ENCODE measurements at regions of chr2 and their contacts with region 1.

Region 1: GRCh38 chr2:70964596-70965386 is 13.6 kb upstream of the ANKRD53 start:
- DNase-seq: peak; percentile 89
- ATAC-seq: peak; percentile 97
- H3K4me3 Mint-ChIP-seq: peak overlapping the region; percentile 77
- H3K27ac Mint-ChIP-seq: no peak overlapping the region
- H3K4me1 Mint-ChIP-seq: peaks cover 3% of the 10 kb centered on the region
- H3K27me3 Mint-ChIP-seq: peaks cover 18% of the 10 kb centered on the region
- CTCF ChIP-seq: peak; percentile 93

Region 2: DNA sequence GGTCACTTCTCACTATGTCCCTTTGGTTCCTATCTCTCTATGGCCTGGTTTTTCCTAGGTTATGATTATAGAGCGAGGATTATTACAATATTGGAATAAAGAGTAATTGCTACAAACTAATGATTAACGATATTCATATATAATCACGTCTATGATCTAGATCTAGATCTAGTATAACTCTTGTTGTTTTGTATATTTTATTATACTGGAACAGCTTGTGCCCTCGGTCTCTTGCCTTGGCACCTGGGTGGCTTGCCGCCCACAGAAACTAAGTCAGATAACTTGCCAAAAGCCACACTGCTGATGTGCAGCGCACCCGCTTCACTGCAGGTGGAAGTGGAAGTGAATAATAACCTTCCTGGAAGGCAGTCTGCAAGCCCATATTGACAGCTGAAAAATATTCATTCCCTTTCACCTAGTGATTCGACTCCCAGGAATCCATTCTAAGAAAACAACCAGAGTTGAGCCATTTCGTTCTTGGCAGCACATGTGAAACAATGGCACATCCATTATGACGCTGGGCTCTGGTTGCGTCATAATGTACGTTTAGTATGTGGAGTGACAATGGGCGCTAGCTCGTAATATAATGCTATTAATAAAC is 12.9 kb after region 1 on chr2:
- CTCF ChIA-PET with region 1: interaction called, 60 read pairs
- POLR2A ChIA-PET with region 1: interaction called, 3 read pairs
- intact Hi-C with region 1: no loop called
- DNase-seq: peak; percentile 67
- ATAC-seq: peak; percentile 35
- H3K4me3 Mint-ChIP-seq: peak overlapping the region; percentile 67
- H3K27ac Mint-ChIP-seq: peak overlapping the region; percentile 83
- H3K4me1 Mint-ChIP-seq: peaks cover 12% of the 10 kb centered on the region
- H3K27me3 Mint-ChIP-seq: no peaks in the 10 kb centered on the region
- CTCF ChIP-seq: peak; percentile 38

Region 3: GRCh38 chr2:70984576-70985282 is 19.9 kb after region 1 on chr2:
- CTCF ChIA-PET with region 1: interaction called, 60 read pairs
- POLR2A ChIA-PET with region 1: interaction called, 4 read pairs
- intact Hi-C with region 1: no loop called
- DNase-seq: peak; percentile 88
- ATAC-seq: peak; percentile 100
- H3K4me3 Mint-ChIP-seq: no peak overlapping the region
- H3K27ac Mint-ChIP-seq: no peak overlapping the region
- H3K4me1 Mint-ChIP-seq: peaks cover 10% of the 10 kb centered on the region
- H3K27me3 Mint-ChIP-seq: no peaks in the 10 kb centered on the region
- CTCF ChIP-seq: peak; percentile 92

Region 4: GRCh38 chr2:70994756-70995729 is 30.3 kb after region 1 on chr2 and contains the start of gene TEX261:
- CTCF ChIA-PET with region 1: interaction called, 53 read pairs
- POLR2A ChIA-PET with region 1: interaction called, 3 read pairs
- intact Hi-C with region 1: loop called (anchors 2 kb)
- DNase-seq: peak; percentile 90
- ATAC-seq: peak; percentile 98
- H3K4me3 Mint-ChIP-seq: peak within 1 kb of the TSS; percentile 99
- H3K27ac Mint-ChIP-seq: peak within 1 kb of the TSS; percentile 92
- H3K4me1 Mint-ChIP-seq: peaks cover 29% of the 10 kb centered on the region
- H3K27me3 Mint-ChIP-seq: no peaks in the 10 kb centered on the region
- CTCF ChIP-seq: peak; percentile 59
- total RNA-seq, gene TEX261: 38.8 to 39.9 TPM

Region 5: GRCh38 chr2:71000780-71001591 is 36.2 kb after region 1 on chr2:
- CTCF ChIA-PET with region 1: interaction called, 53 read pairs
- POLR2A ChIA-PET with region 1: interaction called, 3 read pairs
- intact Hi-C with region 1: no loop called
- DNase-seq: peak; percentile 86
- ATAC-seq: peak; percentile 96
- H3K4me3 Mint-ChIP-seq: peak overlapping the region; percentile 72
- H3K27ac Mint-ChIP-seq: peak overlapping the region; percentile 79
- H3K4me1 Mint-ChIP-seq: peaks cover 16% of the 10 kb centered on the region
- H3K27me3 Mint-ChIP-seq: peaks cover 3% of the 10 kb centered on the region
- CTCF ChIP-seq: peak; percentile 89

Region 6: DNA sequence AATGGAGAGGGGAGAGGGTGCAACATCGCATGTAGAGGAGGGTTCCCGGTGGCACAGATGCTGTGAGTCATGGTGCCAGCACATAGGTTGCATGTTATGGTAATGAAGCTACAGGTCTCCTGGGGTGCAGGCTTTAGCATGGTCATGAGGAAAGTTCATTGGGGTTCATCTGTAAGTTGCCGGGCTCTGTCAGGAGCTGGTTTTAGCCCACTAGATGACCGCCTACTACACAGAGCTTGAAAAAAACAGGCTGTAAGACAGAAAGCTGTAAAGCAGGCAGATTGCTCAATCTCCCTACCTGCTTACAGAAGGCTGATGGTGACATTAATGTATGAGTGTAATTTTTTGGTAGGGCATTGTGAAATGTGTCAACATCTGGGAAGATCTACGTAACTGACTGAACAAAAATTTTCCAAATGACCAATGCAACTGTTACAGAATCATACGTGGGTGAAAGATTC is 512.5 kb after region 1 on chr2:
- CTCF ChIA-PET with region 1: no interaction called
- POLR2A ChIA-PET with region 1: no interaction called
- intact Hi-C with region 1: no loop called
- DNase-seq: no peak
- ATAC-seq: no peak
- H3K4me3 Mint-ChIP-seq: no peak overlapping the region
- H3K27ac Mint-ChIP-seq: no peak overlapping the region
- H3K4me1 Mint-ChIP-seq: no peaks in the 10 kb centered on the region
- H3K27me3 Mint-ChIP-seq: peaks cover 5% of the 10 kb centered on the region
- CTCF ChIP-seq: no peak

Measured in activated CD8-positive, alpha-beta T cell treated with anti-CD3 and anti-CD28 coated beads for 36 hours (primary cell).